Panc1 (cell line): ENCODE measurements at regions of chr6 and their contacts with region 1.

Region 1: DNA sequence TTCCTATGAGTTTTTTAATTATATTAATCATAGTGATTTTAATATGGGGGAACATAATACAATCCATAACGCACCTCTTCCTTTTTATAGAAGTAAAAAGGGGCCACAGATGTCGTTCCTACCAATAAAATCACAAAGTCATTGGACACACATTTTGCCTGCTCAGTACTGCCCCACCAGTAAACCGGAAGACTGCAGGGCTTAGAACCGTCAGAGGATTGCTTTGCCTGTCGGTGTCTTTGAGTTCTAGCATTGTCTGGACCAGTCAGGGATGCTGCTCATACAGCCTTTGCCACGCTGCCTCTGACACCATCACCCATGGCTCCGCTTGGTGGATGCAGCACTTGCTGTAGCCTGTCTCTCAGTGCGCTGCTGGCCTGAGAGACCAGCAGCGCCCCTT is 853.6 kb downstream of the C6orf118 start:
- DNase-seq: no peak
- ATAC-seq: no peak
- H3K4me3 ChIP-seq: no peak overlapping the region
- H3K27ac ChIP-seq: no peak overlapping the region
- H3K4me1 ChIP-seq: no peaks in the 10 kb centered on the region
- H3K27me3 ChIP-seq: no peaks in the 10 kb centered on the region
- CTCF ChIP-seq: no peak

Region 2: GRCh38 chr6:164106345-164106769 is 349.5 kb before region 1 on chr6:
- CTCF ChIA-PET with region 1: no interaction called
- POLR2A ChIA-PET with region 1: interaction called, 10 read pairs
- in situ Hi-C with region 1: no loop called
- intact Hi-C with region 1: no loop called
- DNase-seq: no peak
- ATAC-seq: no peak
- H3K4me3 ChIP-seq: no peak overlapping the region
- H3K27ac ChIP-seq: no peak overlapping the region
- H3K4me1 ChIP-seq: no peaks in the 10 kb centered on the region
- H3K27me3 ChIP-seq: no peaks in the 10 kb centered on the region
- CTCF ChIP-seq: peak; percentile 75